AG04449 (cell line): ENCODE measurements at regions of chr11 and their contacts with region 1.

Region 1: GRCh38 chr11:65540297-65541092 is 15.6 kb downstream of the SCYL1 start:
- DNase-seq: no peak
- H3K4me3 ChIP-seq: peak overlapping the region; percentile 55
- CTCF ChIP-seq: peak; percentile 81

Region 2: DNA sequence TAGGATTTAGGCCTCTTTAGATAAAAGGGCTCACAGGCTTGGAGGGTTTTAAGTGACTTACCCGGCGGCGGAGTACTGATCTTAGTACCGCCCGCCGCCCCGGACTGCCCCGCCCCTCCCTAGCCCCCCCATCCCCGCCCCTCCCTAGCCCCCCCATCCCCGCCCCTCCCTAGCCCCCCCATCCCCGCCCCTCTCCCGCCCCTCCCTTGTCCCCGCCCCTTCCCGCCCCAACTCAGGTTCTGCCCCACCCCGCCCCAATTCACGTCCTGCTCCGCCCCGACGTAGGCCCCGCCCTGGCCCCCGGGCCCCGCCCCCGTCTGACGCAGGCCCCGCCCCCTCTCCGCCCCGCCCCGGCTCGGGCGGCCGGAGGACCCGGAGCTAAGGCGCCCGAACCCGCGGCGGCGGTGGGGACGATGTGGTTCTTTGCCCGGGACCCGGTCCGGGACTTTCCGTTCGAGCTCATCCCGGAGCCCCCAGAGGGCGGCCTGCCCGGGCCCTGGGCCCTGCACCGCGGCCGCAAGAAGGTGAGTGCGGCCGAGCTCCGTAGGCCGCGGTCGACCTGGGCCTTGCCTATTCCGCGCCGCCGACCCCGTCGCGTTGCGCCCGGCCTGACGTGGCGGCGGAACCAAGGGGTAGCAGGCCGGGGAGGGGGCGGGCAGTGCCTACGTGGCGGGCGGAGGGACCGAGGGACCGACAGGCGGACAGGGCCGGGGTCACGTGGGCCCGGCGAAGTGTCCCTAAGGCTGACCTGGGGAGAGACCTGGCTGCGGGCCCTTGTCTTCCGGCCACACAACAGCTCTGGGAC is 15.6 kb before region 1 on chr11 and contains the start of gene SCYL1:
- CTCF ChIA-PET with region 1: interaction called, 65 read pairs
- POLR2A ChIA-PET with region 1: interaction called, 7 read pairs
- DNase-seq: no peak
- H3K4me3 ChIP-seq: peak within 1 kb of the TSS; percentile 85
- CTCF ChIP-seq: no peak

Region 3: DNA sequence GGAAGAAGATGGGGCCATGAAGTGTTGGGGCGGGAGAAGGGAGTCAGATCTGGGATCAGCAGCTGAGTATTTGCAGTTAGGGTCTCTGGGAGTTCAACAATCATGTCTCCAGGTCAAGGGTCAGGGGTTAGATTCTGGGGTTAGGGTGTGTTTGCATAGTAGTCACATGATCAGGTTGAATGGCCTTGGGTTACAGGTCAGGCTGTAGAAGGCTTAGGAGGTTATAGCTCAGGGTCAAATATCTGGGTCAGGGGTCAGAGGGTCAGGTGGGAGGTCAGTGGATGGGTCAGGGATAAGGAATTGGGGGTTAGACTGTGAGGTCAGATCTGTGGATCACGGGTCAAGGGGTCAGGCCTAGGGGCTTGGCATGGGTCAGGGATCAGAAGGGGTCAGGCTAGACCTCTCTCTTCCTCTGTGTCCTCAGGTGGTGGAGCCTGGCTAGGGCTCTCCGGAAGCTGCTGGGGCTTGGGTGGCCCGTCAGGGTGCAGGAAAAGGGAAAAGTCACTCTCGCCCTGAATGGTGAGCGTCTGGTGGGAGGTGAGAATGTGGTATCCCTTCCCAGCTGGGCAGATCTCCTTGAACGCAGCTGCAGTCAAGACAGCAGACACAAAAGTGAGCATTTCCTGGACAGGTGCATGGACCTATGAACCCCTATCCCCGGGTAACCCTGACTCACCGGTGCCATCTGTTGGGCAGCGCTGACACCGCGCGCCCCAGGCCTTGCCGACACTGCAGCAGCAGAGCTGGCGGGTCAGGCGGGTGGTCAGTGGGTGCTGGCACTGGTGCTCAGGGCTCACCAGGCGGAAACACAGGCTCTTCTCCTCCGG is 11.3 kb after region 1 on chr11:
- CTCF ChIA-PET with region 1: interaction called, 60 read pairs
- POLR2A ChIA-PET with region 1: interaction called, 5 read pairs
- DNase-seq: no peak
- H3K4me3 ChIP-seq: no peak overlapping the region
- CTCF ChIP-seq: peak; percentile 56

Region 4: GRCh38 chr11:65569973-65570918 is 29.8 kb after region 1 on chr11 and contains the start of gene ZNRD2:
- CTCF ChIA-PET with region 1: interaction called, 207 read pairs
- POLR2A ChIA-PET with region 1: interaction called, 28 read pairs
- DNase-seq: peak; percentile 88
- H3K4me3 ChIP-seq: peak within 1 kb of the TSS; percentile 89
- CTCF ChIP-seq: peak; percentile 62

Region 5: GRCh38 chr11:65588199-65589054 is 47.9 kb after region 1 on chr11:
- CTCF ChIA-PET with region 1: interaction called, 182 read pairs
- POLR2A ChIA-PET with region 1: interaction called, 3 read pairs
- DNase-seq: no peak
- H3K4me3 ChIP-seq: no peak overlapping the region
- CTCF ChIP-seq: peak; percentile 57

Region 6: GRCh38 chr11:65615229-65615941 is 74.9 kb after region 1 on chr11 and contains the start of gene PCNX3:
- CTCF ChIA-PET with region 1: interaction called, 10 read pairs
- POLR2A ChIA-PET with region 1: interaction called, 6 read pairs
- DNase-seq: peak; percentile 99
- H3K4me3 ChIP-seq: peak within 1 kb of the TSS; percentile 93
- CTCF ChIP-seq: no peak